Right cardiac atrium (tissue), 5 donors: ENCODE measurements at regions of chr3 and their contacts with region 1.

Region 1: DNA sequence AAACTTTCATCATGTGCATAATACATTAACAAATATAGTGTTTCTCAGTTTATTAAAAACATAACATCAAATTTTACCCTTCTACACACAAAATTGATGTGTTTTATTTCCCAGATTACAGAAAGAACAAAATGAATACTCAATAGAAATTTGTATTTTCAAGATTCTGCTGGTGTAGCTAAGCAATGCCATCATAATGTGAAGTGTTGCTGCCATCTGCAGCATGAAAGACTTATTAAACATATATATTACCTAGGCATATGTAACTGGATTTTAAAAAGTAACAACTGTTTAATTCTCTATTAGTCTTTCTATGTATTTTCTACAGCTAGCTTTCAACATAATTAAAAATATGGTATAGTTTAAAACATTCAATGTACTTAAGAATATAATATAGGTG is 27.5 kb downstream of the PLSCR5 start:
- DNase-seq: no peak
- ATAC-seq: peak; percentile 44 to 60
- H3K4me3 ChIP-seq: no peak overlapping the region
- H3K27ac ChIP-seq: no peak overlapping the region
- H3K4me1 ChIP-seq: no peaks in the 10 kb centered on the region
- H3K27me3 ChIP-seq: no peaks in the 10 kb centered on the region

Region 2: DNA sequence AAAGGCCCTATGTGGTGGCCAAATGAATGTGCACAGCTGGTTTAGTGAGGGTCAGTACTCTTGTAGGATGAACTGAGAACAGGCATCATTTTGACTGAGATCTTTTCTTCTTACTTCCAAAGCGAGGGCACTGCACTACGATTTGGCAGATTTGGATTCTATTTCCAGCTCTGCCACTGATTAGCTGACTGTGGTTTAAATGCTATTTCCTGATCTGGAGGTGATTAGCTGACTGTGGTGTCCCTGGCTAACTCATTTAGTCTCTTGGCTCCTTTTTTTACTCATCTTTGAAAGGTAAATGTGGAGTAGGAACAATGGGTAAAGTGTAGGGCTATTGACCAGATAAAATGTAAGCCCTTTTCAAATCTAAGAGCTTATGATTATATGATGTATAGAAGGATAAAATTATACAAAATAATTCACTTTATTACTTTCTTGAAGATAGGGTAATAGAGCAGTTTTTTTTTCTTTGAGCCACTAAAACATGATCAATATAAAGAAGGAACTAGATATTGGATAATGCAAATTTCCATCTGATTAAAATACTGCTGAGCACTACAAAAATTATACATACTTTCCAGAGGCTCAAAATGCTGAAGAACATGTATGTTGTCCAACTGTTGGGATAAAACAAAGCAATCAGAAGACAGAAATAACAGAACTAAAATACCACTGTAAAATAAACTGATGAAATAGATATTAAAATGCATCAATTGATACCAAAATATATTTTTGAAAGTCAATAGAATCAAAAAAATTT is 377.0 kb before region 1 on chr3:
- intact Hi-C with region 1: loop called in 1 of 4 experiments (anchors 10 kb)
- DNase-seq: no peak
- ATAC-seq: no peak
- H3K4me3 ChIP-seq: no peak overlapping the region
- H3K27ac ChIP-seq: no peak overlapping the region
- H3K4me1 ChIP-seq: no peaks in the 10 kb centered on the region
- H3K27me3 ChIP-seq: no peaks in the 10 kb centered on the region

Region 3: GRCh38 chr3:146334151-146334550 is 243.5 kb before region 1 on chr3:
- intact Hi-C with region 1: loop called (anchors 5 to 10 kb)
- DNase-seq: peak; percentile 36 to 69 (median 47)
- ATAC-seq: peak; percentile 32 to 54
- H3K4me3 ChIP-seq: no peak overlapping the region
- H3K27ac ChIP-seq: no peak overlapping the region
- H3K4me1 ChIP-seq: no peaks in the 10 kb centered on the region
- H3K27me3 ChIP-seq: no peaks in the 10 kb centered on the region

Region 4: DNA sequence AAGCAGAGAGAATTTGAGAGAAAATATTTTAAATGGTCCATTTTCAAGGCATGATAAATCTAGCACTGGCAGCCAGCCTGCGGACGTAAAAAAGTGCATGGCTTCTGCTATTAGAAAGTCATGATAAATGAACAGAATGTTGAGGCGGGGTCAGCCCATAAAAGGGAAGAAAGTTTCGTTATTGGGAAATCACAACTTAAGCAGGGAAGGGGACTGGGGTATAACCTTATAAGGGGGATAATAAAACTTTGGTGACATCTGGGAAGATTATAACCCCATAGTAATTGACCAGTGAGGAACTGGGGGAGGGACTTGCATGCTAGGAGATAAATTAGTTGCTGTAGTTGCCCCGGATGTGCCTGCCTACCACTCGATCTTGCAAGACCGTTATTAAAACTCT is 238.3 kb before region 1 on chr3:
- intact Hi-C with region 1: loop called (anchors 5 to 10 kb)
- DNase-seq: no peak
- ATAC-seq: no peak
- H3K4me3 ChIP-seq: no peak overlapping the region
- H3K27ac ChIP-seq: no peak overlapping the region
- H3K4me1 ChIP-seq: no peaks in the 10 kb centered on the region
- H3K27me3 ChIP-seq: no peaks in the 10 kb centered on the region